Caco-2 (cell line): ENCODE measurements at regions of chr18 and their contacts with region 1.

Region 1: GRCh38 chr18:80034068-80034851 is at the start of gene RBFA:
- DNase-seq: peak; percentile 94 to 96
- H3K4me3 ChIP-seq: peak within 1 kb of the TSS; percentile 68
- H3K4me3 Mint-ChIP-seq: peak within 1 kb of the TSS; percentile 91
- H3K27ac Mint-ChIP-seq: peak within 1 kb of the TSS; percentile 81
- H3K4me1 ChIP-seq: no peaks in the 10 kb centered on the region
- H3K4me1 Mint-ChIP-seq: peaks cover 12% of the 10 kb centered on the region
- H3K27me3 ChIP-seq: no peaks in the 10 kb centered on the region
- H3K27me3 Mint-ChIP-seq: no peaks in the 10 kb centered on the region
- CTCF ChIP-seq: peak; percentile 24 to 41
- total RNA-seq, gene RBFA: 19.2 and 19.3 TPM in 2 replicates

Region 2: GRCh38 chr18:79679111-79679872 is 355.0 kb before region 1 on chr18 and contains the start of gene CTDP1:
- CTCF ChIA-PET with region 1: no interaction called
- POLR2A ChIA-PET with region 1: no interaction called
- intact Hi-C with region 1: loop called (anchors 5 kb)
- DNase-seq: peak; percentile 93 to 95
- H3K4me3 ChIP-seq: peak within 1 kb of the TSS; percentile 87
- H3K4me3 Mint-ChIP-seq: peak within 1 kb of the TSS; percentile 76
- H3K27ac Mint-ChIP-seq: peak within 1 kb of the TSS; percentile 90
- H3K4me1 ChIP-seq: no peaks in the 10 kb centered on the region
- H3K4me1 Mint-ChIP-seq: no peaks in the 10 kb centered on the region
- H3K27me3 ChIP-seq: no peaks in the 10 kb centered on the region
- H3K27me3 Mint-ChIP-seq: no peaks in the 10 kb centered on the region
- CTCF ChIP-seq: no peak
- total RNA-seq, gene CTDP1: 14.7 and 16.1 TPM in 2 replicates

Region 3: GRCh38 chr18:79964330-79965118 is 69.7 kb before region 1 on chr18 and contains the start of gene HSBP1L1:
- CTCF ChIA-PET with region 1: no interaction called
- POLR2A ChIA-PET with region 1: interaction called, 10 read pairs
- intact Hi-C with region 1: no loop called
- DNase-seq: peak; percentile 78 to 85
- H3K4me3 ChIP-seq: peak within 1 kb of the TSS; percentile 67
- H3K4me3 Mint-ChIP-seq: peak within 1 kb of the TSS; percentile 75
- H3K27ac Mint-ChIP-seq: peak within 1 kb of the TSS; percentile 85
- H3K4me1 ChIP-seq: peaks cover 7% of the 10 kb centered on the region; the same call in 1 of the 2 replicates
- H3K4me1 Mint-ChIP-seq: peaks cover 7% of the 10 kb centered on the region
- H3K27me3 ChIP-seq: no peaks in the 10 kb centered on the region
- H3K27me3 Mint-ChIP-seq: no peaks in the 10 kb centered on the region
- CTCF ChIP-seq: no peak
- total RNA-seq, gene HSBP1L1: 25.7 and 25.9 TPM in 2 replicates

Region 4: GRCh38 chr18:80046961-80047541 is 12.8 kb after region 1 on chr18:
- CTCF ChIA-PET with region 1: no interaction called
- POLR2A ChIA-PET with region 1: interaction called, 10 read pairs
- intact Hi-C with region 1: no loop called
- DNase-seq: no peak
- H3K4me3 ChIP-seq: no peak overlapping the region
- H3K4me3 Mint-ChIP-seq: no peak overlapping the region
- H3K27ac Mint-ChIP-seq: no peak overlapping the region
- H3K4me1 ChIP-seq: no peaks in the 10 kb centered on the region
- H3K4me1 Mint-ChIP-seq: no peaks in the 10 kb centered on the region
- H3K27me3 ChIP-seq: no peaks in the 10 kb centered on the region
- H3K27me3 Mint-ChIP-seq: no peaks in the 10 kb centered on the region
- CTCF ChIP-seq: no peak

Region 5: GRCh38 chr18:80108728-80109675 is 74.7 kb after region 1 on chr18 and contains the start of gene ADNP2:
- CTCF ChIA-PET with region 1: interaction called, 3 read pairs
- POLR2A ChIA-PET with region 1: interaction called, 9 read pairs
- intact Hi-C with region 1: loop called (anchors 5 kb)
- DNase-seq: peak; percentile 88 to 93
- H3K4me3 ChIP-seq: peak within 1 kb of the TSS; percentile 67
- H3K4me3 Mint-ChIP-seq: peak within 1 kb of the TSS; percentile 67
- H3K27ac Mint-ChIP-seq: peak within 1 kb of the TSS; percentile 83
- H3K4me1 ChIP-seq: no peaks in the 10 kb centered on the region
- H3K4me1 Mint-ChIP-seq: peaks cover 27% of the 10 kb centered on the region
- H3K27me3 ChIP-seq: no peaks in the 10 kb centered on the region
- H3K27me3 Mint-ChIP-seq: no peaks in the 10 kb centered on the region
- CTCF ChIP-seq: no peak
- total RNA-seq, gene ADNP2: 21.4 and 22.1 TPM in 2 replicates

Region 6: GRCh38 chr18:80147418-80148325 is 113.4 kb after region 1 on chr18:
- CTCF ChIA-PET with region 1: no interaction called
- POLR2A ChIA-PET with region 1: interaction called, 6 read pairs
- intact Hi-C with region 1: loop called (anchors 10 kb)
- DNase-seq: peak; percentile 78 to 85
- H3K4me3 ChIP-seq: peak overlapping the region; percentile 54
- H3K4me3 Mint-ChIP-seq: peak overlapping the region; percentile 81
- H3K27ac Mint-ChIP-seq: peak overlapping the region; percentile 50
- H3K4me1 ChIP-seq: no peaks in the 10 kb centered on the region
- H3K4me1 Mint-ChIP-seq: no peaks in the 10 kb centered on the region
- H3K27me3 ChIP-seq: no peaks in the 10 kb centered on the region
- H3K27me3 Mint-ChIP-seq: no peaks in the 10 kb centered on the region
- CTCF ChIP-seq: no peak